ENCODE measurements at regions of chr18 and their contacts with region 1.

Region 1: DNA sequence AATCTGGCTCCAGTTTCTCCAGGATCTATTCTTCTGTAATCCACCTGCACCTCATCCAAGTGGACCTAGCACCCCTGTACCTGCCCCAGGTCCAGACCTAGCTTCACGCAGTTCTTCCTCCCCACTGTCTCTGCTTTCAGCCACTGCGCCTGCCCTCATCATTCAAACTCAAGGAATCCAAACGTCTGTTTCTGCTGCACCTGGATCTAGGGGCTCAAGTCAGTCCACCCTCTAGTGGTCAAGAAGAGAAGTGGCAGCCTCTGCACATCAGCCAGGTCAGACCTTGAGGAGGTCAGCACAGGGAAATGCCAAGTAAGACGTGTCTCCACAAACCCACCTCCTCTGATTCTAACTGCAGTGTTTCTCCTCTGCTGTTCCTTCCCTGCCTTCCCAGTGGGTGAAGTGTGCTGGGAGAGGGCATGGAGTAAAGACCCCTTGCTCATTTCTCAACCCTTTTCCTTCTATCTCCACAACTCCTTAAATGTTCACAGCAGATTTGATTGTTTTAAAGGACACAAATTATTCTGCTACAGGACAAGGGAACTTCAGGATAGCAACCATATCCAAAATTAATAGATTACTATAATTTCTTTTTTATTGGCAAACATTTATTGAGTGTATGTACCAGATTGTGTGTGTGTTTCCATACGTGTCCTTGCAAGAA is 8.6 kb upstream of the RNF152 start:
- DNase-seq: no peak
- H3K4me3 ChIP-seq: no peak overlapping the region
- H3K27ac ChIP-seq: no peak overlapping the region
- H3K4me1 ChIP-seq: no peaks in the 10 kb centered on the region
- H3K27me3 ChIP-seq: peaks cover 0 to 45% (median 4%) of the 10 kb centered on the region in 7 donors
- CTCF ChIP-seq: peak; percentile 48 to 88 (median 80)
- POLR2A ChIP-seq: no peak

Region 2: GRCh38 chr18:61531182-61531581 is 370.3 kb before region 1 on chr18:
- intact Hi-C with region 1: no loop called
- DNase-seq: no peak
- H3K4me3 ChIP-seq: no peak overlapping the region
- H3K27ac ChIP-seq: no peak overlapping the region
- H3K4me1 ChIP-seq: no peaks in the 10 kb centered on the region
- H3K27me3 ChIP-seq: peaks cover 0 to 13% (median 0%) of the 10 kb centered on the region in 7 donors
- CTCF ChIP-seq: no peak
- POLR2A ChIP-seq: no peak

Region 3: DNA sequence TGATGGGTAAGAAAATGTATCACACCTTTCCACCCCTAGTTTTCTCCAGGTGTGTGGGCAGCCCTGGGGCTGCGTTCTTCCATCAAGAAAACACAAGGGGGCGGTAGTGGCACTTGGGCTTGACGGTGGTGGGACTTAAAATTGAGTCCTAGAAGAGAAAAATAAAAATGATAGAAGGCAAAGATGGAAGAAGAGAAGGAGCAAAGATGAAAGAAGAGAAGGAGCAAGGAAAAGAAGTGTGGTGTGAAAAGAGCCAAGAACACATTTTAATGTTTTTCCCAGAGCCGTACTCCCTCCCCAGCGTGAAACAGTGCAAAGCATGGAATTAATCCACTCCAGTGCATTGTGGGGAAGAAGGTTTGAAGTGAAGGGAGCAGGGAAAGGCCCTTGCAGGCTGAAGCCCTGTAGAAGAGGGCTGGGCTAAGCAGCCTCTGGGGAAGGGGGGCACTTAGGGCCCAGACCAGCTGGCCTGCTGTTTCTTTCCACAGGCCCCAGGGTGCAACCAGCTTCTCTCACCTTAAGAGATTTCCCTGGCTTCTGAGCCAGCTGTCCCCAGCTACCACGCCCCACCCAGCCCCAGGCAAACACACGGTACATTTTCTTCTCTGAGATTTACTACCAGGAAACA is 265.4 kb before region 1 on chr18:
- intact Hi-C with region 1: loop called (anchors 10 kb)
- DNase-seq: no peak
- H3K4me3 ChIP-seq: no peak overlapping the region
- H3K27ac ChIP-seq: no peak overlapping the region
- H3K4me1 ChIP-seq: no peaks in the 10 kb centered on the region
- H3K27me3 ChIP-seq: peaks cover 0 to 5% (median 0%) of the 10 kb centered on the region in 7 donors
- CTCF ChIP-seq: peak in 10 of 11 experiments; percentile 31 to 78 (median 56)
- POLR2A ChIP-seq: no peak

Region 4: GRCh38 chr18:61770279-61770678 is 131.2 kb before region 1 on chr18:
- intact Hi-C with region 1: no loop called
- DNase-seq: no peak
- H3K4me3 ChIP-seq: no peak overlapping the region
- H3K27ac ChIP-seq: no peak overlapping the region
- H3K4me1 ChIP-seq: no peaks in the 10 kb centered on the region
- H3K27me3 ChIP-seq: no peaks in the 10 kb centered on the region
- CTCF ChIP-seq: no peak
- POLR2A ChIP-seq: no peak